ENCODE measurements at regions of chr2 and their contacts with region 1.

Region 1: DNA sequence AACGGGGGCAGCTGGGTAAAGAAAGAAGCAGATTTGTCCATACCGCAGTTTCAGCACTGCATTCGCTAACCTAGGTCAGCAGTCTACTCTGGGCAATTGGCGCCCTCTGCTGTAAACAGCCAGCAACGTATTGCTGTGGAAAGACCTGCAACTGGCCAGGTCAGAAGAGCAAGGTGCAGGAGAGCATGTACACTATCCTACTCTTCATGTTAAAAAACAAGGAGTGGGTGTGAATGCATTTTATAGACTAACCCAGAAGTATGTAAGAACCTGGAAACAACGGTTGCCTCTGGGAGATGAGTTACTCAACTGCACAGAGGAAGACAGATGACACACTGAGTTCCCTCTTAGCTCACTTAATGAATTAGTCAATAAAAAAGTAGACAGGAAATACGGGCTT is 6.2 kb downstream of the MRPS5 start:
- DNase-seq: peak; percentile 45 to 56
- ATAC-seq: peak; percentile 76 to 93 (median 87)
- H3K4me3 ChIP-seq: no peak overlapping the region
- H3K27ac ChIP-seq: no peak overlapping the region
- H3K4me1 ChIP-seq: peaks cover 5 to 41% (median 30%) of the 10 kb centered on the region in 9 donors
- H3K27me3 ChIP-seq: no peaks in the 10 kb centered on the region
- CTCF ChIP-seq: peak; percentile 39 to 80 (median 71)

Region 2: GRCh38 chr2:95076784-95077529 is 38.5 kb before region 1 on chr2:
- intact Hi-C with region 1: loop called in 2 of 10 experiments (anchors 5 kb)
- DNase-seq: peak; percentile 57 to 74
- ATAC-seq: peak; percentile 56 to 89 (median 78)
- H3K4me3 ChIP-seq: peak overlapping the region in 9 of 10 donors; percentile 20 to 61 (median 51)
- H3K27ac ChIP-seq: no peak overlapping the region
- H3K4me1 ChIP-seq: peaks cover 0 to 10% (median 9%) of the 10 kb centered on the region in 9 donors
- H3K27me3 ChIP-seq: peaks cover 5 to 55% (median 54%) of the 10 kb centered on the region in 7 donors
- CTCF ChIP-seq: peak; percentile 60 to 86 (median 83)

Measured in heart right ventricle (tissue), 16 donors.